H1 (cell line): ENCODE measurements at regions of chr21 and their contacts with region 1.

Region 1: DNA sequence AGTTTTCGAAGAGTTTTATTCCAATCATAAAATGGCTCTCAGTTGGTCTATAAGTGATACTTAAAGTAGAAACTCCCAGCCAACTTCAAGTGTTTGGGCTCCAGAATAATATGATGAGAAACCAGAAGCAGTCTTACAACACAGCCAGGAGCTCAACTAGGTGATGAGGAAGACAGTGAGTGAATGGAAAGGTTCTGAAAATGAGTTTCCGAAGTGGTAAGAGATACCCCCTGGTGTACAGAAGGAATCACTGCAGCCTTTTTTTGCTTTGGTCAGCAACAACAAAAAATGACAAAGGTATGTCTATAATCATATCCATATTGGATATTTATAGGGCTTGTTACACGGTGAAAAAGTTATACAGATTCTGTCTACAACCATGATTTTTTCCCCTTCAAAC is 16.5 kb downstream of the KRTAP19-1 start:
- DNase-seq: no peak
- H3K4me3 ChIP-seq: no peak overlapping the region
- H3K27ac ChIP-seq: no peak overlapping the region
- H3K4me1 ChIP-seq: no peaks in the 10 kb centered on the region
- H3K27me3 ChIP-seq: no peaks in the 10 kb centered on the region
- CTCF ChIP-seq: peak in 2 of 3 experiments; percentile 65 to 74; a peak in 3 of 4 replicates
- EP300 ChIP-seq: no peak
- POLR2A ChIP-seq: no peak
- RAD21 ChIP-seq: peak; percentile 75 to 76

Region 2: DNA sequence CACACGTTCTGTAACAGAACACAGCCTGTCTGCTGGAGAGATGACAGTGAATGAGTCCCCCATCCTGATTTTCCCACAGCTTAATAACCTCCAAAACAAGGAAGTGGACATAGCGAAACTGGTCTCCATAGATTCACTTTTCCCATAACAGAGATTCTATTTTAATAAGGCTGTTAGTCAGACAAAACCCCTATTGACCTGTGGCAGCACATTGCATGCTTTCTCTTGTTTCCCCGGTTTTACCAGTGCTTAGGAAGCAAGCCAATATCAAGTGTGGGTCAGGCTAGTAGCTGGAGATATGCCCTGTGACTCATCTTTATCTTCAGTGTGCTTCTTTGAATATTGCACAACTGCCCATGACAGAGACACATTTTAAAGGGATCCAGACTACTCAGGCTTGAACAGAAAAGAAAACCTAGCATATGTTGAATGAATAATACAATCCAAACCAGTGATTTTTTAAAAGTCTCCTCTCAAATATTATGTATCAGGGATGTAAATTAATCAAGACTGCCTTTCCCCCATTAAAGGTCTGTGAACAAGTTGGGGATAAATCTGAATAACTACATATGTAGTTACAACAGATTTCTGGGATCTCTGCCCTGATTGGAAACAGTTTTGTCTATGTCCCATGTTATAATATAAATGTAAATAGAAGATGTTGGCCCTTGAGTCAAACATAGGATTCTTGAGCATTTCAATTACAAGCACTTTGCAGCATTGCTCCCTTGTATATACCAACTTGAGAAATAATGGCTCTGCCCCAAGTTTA is 235.9 kb before region 1 on chr21:
- CTCF ChIA-PET with region 1: no interaction called
- POLR2A ChIA-PET with region 1: no interaction called
- DNase-seq: no peak
- H3K4me3 ChIP-seq: no peak overlapping the region
- H3K27ac ChIP-seq: no peak overlapping the region
- H3K4me1 ChIP-seq: no peaks in the 10 kb centered on the region
- H3K27me3 ChIP-seq: no peaks in the 10 kb centered on the region
- CTCF ChIP-seq: no peak
- EP300 ChIP-seq: no peak
- POLR2A ChIP-seq: no peak
- RAD21 ChIP-seq: no peak

Region 3: GRCh38 chr21:30478011-30478410 is 14.3 kb after region 1 on chr21:
- CTCF ChIA-PET with region 1: interaction called, 11 read pairs
- POLR2A ChIA-PET with region 1: no interaction called
- DNase-seq: no peak
- H3K4me3 ChIP-seq: no peak overlapping the region
- H3K27ac ChIP-seq: no peak overlapping the region
- H3K4me1 ChIP-seq: no peaks in the 10 kb centered on the region
- H3K27me3 ChIP-seq: no peaks in the 10 kb centered on the region
- CTCF ChIP-seq: no peak
- EP300 ChIP-seq: no peak
- POLR2A ChIP-seq: no peak
- RAD21 ChIP-seq: no peak

Region 4: DNA sequence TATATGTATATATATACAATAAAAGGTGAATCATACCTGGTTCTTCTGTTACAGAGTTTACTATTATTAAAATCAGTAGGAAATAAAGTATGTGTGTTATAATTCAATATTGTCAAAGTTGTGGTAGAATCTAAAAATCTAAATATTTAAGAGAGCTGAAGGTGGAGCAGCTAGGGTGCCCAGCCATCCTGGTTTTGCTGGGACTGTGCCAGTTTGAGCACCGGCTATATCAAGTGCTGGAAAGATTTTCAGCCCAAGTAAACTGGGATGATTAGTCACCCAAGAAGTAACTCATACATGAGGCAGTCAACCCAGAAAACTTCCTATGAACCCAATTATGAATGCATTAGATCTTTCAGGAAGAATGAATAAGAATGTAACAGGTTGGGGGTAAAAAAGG is 55.2 kb after region 1 on chr21:
- CTCF ChIA-PET with region 1: no interaction called
- POLR2A ChIA-PET with region 1: no interaction called
- DNase-seq: no peak
- H3K4me3 ChIP-seq: no peak overlapping the region
- H3K27ac ChIP-seq: no peak overlapping the region
- H3K4me1 ChIP-seq: no peaks in the 10 kb centered on the region
- H3K27me3 ChIP-seq: no peaks in the 10 kb centered on the region
- CTCF ChIP-seq: no peak
- EP300 ChIP-seq: no peak
- POLR2A ChIP-seq: no peak
- RAD21 ChIP-seq: no peak

Region 5: DNA sequence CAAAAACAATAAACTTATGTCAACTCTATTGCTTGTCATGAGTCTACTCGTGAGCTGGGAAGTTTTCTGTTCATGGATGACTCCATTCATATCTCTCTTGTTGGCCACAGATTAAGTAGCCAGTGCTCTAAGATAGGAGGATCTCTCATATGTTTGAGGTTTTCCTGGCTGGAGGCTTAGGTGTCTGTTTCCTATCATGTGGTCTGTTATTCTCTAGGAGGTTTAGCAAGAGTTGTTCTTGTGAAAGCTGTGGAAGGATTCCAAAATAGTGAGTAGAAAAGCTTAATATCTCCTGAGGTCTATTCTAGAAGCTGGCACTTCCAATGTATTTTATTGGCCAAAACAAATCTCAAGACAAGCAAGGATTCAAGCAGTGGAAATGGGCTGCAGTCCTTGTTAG is 165.5 kb after region 1 on chr21:
- CTCF ChIA-PET with region 1: no interaction called
- POLR2A ChIA-PET with region 1: no interaction called
- DNase-seq: no peak
- H3K4me3 ChIP-seq: no peak overlapping the region
- H3K27ac ChIP-seq: no peak overlapping the region
- H3K4me1 ChIP-seq: peaks cover 0 to 2% (median 0%) of the 10 kb centered on the region in 4 experiments; a peak in 2 of 7 replicates
- H3K27me3 ChIP-seq: peaks cover 0 to 1% (median 0%) of the 10 kb centered on the region in 4 experiments; a peak in 1 of 7 replicates
- CTCF ChIP-seq: no peak
- EP300 ChIP-seq: no peak
- POLR2A ChIP-seq: no peak
- RAD21 ChIP-seq: no peak